ENCODE measurements at regions of chr18 and their contacts with region 1.

Region 1: DNA sequence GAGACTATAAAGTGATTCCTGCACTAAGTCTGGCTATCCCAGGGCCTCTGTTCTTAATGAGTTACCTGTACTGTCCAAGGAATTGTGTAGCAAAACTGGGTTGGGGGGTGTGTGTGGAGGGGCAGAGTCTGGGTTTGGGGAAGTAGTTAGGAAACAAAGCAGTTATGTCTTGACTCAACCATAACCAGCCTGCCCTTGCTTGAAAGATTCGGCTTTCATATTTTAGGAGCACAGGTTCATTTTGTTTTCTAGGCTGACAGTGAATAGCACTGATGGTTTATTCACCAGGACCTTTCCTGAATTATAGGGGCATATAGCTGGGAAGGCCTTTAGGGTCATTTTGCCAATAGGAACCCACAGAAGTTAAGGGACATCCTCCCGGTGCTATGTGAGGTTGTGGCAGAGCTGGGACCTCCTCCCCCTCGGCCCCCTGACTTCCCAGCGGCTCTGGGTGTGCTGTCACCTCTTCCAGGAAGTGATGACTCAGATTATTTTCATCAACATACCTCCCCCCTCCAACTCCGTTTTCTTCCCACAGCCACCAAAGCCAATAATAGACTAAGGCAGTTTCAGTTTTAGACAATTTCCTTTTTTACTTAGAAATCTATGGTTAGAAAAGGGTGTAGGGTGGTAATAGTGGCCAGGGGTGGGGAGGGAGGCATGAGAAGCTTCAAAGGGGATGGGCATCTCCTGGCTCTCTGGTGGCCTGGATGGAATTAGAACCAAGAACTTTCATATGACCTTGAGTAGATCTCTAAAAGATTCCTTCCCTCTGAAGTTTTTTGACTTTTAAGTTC is 44.8 kb downstream of the SETBP1 start:
- DNase-seq: peak; percentile 82
- ATAC-seq: peak; percentile 77
- H3K4me3 Mint-ChIP-seq: peak overlapping the region; percentile 44
- H3K27ac Mint-ChIP-seq: peak overlapping the region; percentile 77
- H3K4me1 Mint-ChIP-seq: peaks cover 74% of the 10 kb centered on the region
- H3K27me3 Mint-ChIP-seq: no peaks in the 10 kb centered on the region
- CTCF ChIP-seq: no peak

Region 2: GRCh38 chr18:44680266-44681075 is 45.0 kb before region 1 on chr18 and contains the start of gene SETBP1:
- CTCF ChIA-PET with region 1: interaction called, 4 read pairs
- POLR2A ChIA-PET with region 1: interaction called, 4 read pairs
- intact Hi-C with region 1: loop called (anchors 2 kb)
- DNase-seq: peak; percentile 75
- ATAC-seq: peak; percentile 50
- H3K4me3 Mint-ChIP-seq: no peak within 1 kb of the TSS
- H3K27ac Mint-ChIP-seq: peak within 1 kb of the TSS; percentile 87
- H3K4me1 Mint-ChIP-seq: no peaks in the 10 kb centered on the region
- H3K27me3 Mint-ChIP-seq: peaks cover 25% of the 10 kb centered on the region
- CTCF ChIP-seq: no peak
- total RNA-seq, gene SETBP1: 10.2 to 10.4 TPM

Region 3: DNA sequence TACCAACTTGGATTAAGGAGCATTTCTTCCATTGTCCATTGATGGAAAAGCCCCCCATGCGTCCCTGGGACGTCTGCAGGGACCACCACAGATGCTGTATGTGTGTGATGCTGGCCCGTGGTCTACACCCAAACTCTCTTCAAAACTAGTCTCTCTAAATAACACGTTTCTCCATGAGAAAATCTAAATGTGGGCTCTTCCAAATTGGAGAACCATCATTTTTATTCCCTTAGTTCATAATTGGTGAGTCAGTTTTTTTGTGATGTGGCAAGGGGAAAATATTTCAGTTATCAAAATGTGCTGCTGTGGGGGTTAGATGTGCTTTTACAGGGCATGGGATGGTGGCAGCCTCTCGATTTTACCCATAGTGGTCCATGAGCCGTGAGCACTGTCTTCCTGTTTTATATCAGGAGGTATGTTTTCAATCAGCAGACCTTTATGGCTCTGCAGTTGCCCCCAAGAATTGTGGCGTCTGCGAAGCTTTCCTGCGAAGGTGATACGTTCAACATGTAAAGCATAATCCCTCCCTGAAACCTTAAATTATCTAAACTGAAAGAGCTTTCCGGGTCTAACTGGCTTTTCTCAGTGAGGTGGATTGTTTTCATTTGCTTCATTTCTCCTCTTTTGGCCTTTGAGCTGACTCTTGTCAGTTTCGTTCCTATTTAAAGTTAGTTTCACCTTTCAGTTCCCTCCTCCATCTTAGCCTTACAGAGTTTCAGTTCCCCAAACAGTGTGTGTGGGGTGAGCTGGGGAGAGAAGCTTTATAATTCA is 33.5 kb after region 1 on chr18:
- CTCF ChIA-PET with region 1: interaction called, 8 read pairs
- POLR2A ChIA-PET with region 1: interaction called, 14 read pairs
- intact Hi-C with region 1: loop called (anchors 2 kb)
- DNase-seq: peak; percentile 79
- ATAC-seq: peak; percentile 91
- H3K4me3 Mint-ChIP-seq: peak overlapping the region; percentile 27
- H3K27ac Mint-ChIP-seq: peak overlapping the region; percentile 94
- H3K4me1 Mint-ChIP-seq: peaks cover 26% of the 10 kb centered on the region
- H3K27me3 Mint-ChIP-seq: peaks cover 3% of the 10 kb centered on the region
- CTCF ChIP-seq: no peak

Region 4: GRCh38 chr18:44799907-44800421 is 74.5 kb after region 1 on chr18:
- CTCF ChIA-PET with region 1: interaction called, 5 read pairs
- POLR2A ChIA-PET with region 1: interaction called, 4 read pairs
- intact Hi-C with region 1: loop called (anchors 5 kb)
- DNase-seq: no peak
- ATAC-seq: peak; percentile 13
- H3K4me3 Mint-ChIP-seq: peak overlapping the region; percentile 3
- H3K27ac Mint-ChIP-seq: peak overlapping the region; percentile 60
- H3K4me1 Mint-ChIP-seq: peaks cover 74% of the 10 kb centered on the region
- H3K27me3 Mint-ChIP-seq: no peaks in the 10 kb centered on the region
- CTCF ChIP-seq: no peak

Region 5: DNA sequence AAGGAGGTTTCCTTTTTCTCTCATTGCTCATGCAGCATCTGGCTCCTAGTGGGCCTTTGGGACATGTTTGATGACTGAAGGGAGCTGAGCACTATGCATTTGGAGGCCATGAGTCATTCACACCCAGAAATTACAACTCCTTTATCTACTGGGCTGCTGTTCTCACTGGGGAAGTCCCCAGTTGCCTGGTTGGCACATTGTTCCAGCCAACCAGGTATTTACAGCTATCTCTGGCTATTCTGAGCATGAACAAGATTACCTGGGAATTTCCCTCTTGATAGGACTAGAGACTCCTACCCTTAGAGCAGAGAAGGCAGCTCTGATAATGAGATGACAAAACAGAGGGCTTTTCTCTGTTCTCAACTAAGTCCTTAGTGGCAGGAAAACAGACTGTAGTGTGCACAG is 161.7 kb after region 1 on chr18:
- CTCF ChIA-PET with region 1: no interaction called
- POLR2A ChIA-PET with region 1: interaction called, 4 read pairs
- intact Hi-C with region 1: loop called (anchors 2 kb)
- DNase-seq: peak; percentile 74
- ATAC-seq: peak; percentile 97
- H3K4me3 Mint-ChIP-seq: no peak overlapping the region
- H3K27ac Mint-ChIP-seq: peak overlapping the region; percentile 92
- H3K4me1 Mint-ChIP-seq: peaks cover 34% of the 10 kb centered on the region
- H3K27me3 Mint-ChIP-seq: no peaks in the 10 kb centered on the region
- CTCF ChIP-seq: no peak